ENCODE measurements at regions of chr9 and their contacts with region 1.

Region 1: DNA sequence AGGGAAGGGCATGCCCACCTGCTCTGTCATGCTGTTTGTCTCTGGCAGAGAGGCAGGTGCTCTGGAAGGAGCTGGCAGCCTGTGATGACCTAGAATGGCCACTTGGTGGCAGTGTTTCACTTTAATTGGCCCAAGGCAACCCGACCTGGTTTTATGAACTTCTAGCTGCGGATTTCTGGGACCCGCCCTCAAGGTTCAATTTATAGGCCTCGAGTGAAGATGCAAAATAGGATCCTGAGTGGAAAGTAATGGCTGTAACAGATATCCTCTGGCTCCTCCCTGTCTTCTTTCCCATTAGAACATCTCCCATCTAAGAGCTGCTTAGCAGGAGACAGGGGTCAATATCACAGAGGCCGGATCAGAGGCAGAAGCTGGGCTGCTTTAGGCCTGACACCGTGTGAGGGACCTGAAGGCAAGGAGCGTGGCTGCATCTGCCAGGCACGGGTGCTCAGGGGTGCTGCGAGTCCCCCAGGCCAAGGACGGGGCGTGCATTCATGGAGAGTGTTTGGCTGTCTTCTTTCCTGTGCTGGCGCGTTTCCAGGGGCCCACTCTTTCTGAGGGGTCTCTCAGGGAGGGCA is 56.7 kb upstream of the SLC28A3 start:
- DNase-seq: peak; percentile 60 to 77
- ATAC-seq: peak; percentile 78 to 93 (median 84)
- H3K4me3 ChIP-seq: no peak overlapping the region
- H3K4me3 Mint-ChIP-seq: no peak overlapping the region
- H3K27ac ChIP-seq: no peak overlapping the region
- H3K27ac Mint-ChIP-seq: no peak overlapping the region
- H3K4me1 ChIP-seq: peaks cover 7% of the 10 kb centered on the region
- H3K4me1 Mint-ChIP-seq: no peaks in the 10 kb centered on the region
- H3K27me3 ChIP-seq: no peaks in the 10 kb centered on the region
- H3K27me3 Mint-ChIP-seq: no peaks in the 10 kb centered on the region
- CTCF ChIP-seq: peak; percentile 94

Region 2: DNA sequence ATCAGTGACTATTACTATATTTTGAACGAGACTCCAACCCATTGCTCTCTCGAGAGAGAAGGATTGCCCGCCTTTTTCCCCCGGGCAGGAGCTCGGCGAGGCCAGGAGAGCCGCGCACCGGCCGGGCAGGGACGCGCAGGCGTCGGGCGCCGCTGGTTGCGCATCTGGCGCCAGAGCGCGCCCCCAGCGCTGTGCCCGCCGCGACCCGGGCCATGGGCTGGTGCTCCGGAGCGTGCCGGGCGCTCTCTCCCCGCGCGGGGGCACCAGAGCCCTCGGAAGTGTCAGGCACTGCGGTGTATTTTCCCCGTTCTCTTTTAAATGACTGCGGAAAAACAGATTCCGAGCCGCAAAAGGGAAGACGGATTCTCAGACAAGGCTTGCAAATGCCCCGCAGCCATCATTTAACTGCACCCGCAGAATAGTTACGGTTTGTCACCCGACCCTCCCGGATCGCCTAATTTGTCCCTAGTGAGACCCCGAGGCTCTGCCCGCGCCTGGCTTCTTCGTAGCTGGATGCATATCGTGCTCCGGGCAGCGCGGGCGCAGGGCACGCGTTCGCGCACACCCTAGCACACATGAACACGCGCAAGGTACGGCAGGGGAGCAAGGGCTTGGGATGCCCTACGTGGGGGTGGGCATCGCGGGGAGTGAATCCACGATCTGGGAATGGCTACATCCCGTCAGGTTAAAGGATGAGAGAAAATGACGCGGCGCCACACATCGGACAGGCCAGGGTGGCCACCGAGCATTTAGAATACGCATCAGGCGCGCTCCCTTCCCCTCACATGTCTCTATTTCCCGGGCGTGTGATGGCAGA is 271.2 kb after region 1 on chr9:
- intact Hi-C with region 1: no loop called
- DNase-seq: peak in 1 of 2 donors; percentile 18
- ATAC-seq: peak in 2 of 3 donors; percentile 53
- H3K4me3 ChIP-seq: no peak overlapping the region
- H3K4me3 Mint-ChIP-seq: peak overlapping the region; percentile 14
- H3K27ac ChIP-seq: no peak overlapping the region
- H3K27ac Mint-ChIP-seq: no peak overlapping the region
- H3K4me1 ChIP-seq: peaks cover 27% of the 10 kb centered on the region
- H3K4me1 Mint-ChIP-seq: peaks cover 0 to 15% of the 10 kb centered on the region in 2 donors
- H3K27me3 ChIP-seq: peaks cover 33% of the 10 kb centered on the region
- H3K27me3 Mint-ChIP-seq: peaks cover 54 to 56% of the 10 kb centered on the region in 2 donors
- CTCF ChIP-seq: no peak

Region 3: DNA sequence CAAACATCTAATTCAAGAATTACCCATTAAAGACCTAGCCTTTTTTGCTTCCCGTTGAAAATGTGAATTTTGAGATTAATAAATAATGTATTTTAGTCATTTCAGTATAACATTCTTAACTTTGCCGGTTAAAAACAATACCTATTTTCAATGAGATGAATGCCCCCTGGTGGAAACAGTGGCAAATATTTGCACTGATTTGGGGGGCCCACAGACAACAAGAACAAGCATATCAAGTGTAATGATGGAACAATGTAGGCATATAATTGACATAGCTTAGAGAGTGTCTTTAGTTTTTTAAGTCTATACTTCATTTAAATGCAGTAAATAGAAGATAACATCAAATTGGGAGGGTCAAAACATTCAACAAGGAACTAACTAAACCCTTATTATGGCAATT is 384.2 kb after region 1 on chr9:
- intact Hi-C with region 1: loop called (anchors 1 kb)
- DNase-seq: peak in 1 of 2 donors; percentile 21
- ATAC-seq: no peak
- H3K4me3 ChIP-seq: no peak overlapping the region
- H3K4me3 Mint-ChIP-seq: no peak overlapping the region
- H3K27ac ChIP-seq: no peak overlapping the region
- H3K27ac Mint-ChIP-seq: no peak overlapping the region
- H3K4me1 ChIP-seq: no peaks in the 10 kb centered on the region
- H3K4me1 Mint-ChIP-seq: no peaks in the 10 kb centered on the region
- H3K27me3 ChIP-seq: no peaks in the 10 kb centered on the region
- H3K27me3 Mint-ChIP-seq: peaks cover 30 to 62% of the 10 kb centered on the region in 2 donors
- CTCF ChIP-seq: no peak

Region 4: DNA sequence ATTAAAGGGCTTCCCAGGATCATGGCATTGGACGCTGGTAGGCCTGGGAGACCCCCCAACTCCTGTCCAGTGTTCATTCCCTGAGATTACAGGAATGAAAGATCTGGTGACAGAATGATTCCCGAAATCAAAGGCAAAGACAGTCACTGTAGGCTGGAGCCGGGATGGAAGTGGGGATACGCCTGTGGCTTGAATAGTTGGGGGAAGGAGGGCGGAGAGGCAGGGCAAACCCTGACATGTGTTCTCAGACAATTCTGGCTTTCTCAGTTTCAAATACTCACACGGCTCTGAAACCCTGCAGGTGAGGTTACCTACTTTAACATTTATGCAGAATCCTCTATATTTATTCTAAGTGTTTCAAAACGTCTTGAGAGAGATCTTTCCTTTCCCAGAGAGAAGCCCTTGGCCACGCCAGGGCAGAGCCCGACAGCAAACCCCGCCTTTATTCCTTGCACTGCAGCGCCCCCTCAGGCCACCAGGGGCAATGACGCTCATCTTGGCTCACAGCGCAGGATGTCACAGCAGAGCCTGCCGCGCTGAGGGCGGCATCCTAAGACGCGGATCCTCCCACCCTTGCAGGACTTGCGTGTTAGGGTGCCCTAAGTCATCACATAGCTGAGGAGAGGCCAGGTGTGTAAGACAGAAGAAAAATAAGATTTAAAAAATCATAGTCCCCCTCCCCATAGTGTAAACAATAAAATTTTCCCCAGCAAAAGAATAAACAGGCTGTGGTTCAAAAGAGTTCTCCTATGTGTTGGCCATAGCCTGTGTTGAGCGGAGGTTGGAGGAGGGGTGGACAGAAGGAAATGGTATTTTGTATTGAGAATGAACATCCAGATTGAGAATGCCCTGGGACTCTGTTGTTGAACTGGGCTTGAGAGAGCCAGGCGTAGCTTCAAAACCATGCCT is 556.8 kb after region 1 on chr9:
- intact Hi-C with region 1: loop called (anchors 1 kb)
- DNase-seq: peak; percentile 43
- ATAC-seq: peak; percentile 84 to 97 (median 86)
- H3K4me3 ChIP-seq: no peak overlapping the region
- H3K4me3 Mint-ChIP-seq: no peak overlapping the region
- H3K27ac ChIP-seq: no peak overlapping the region
- H3K27ac Mint-ChIP-seq: no peak overlapping the region
- H3K4me1 ChIP-seq: no peaks in the 10 kb centered on the region
- H3K4me1 Mint-ChIP-seq: peaks cover 0 to 7% of the 10 kb centered on the region in 2 donors
- H3K27me3 ChIP-seq: no peaks in the 10 kb centered on the region
- H3K27me3 Mint-ChIP-seq: peaks cover 16 to 22% of the 10 kb centered on the region in 2 donors
- CTCF ChIP-seq: peak; percentile 69

Region 5: GRCh38 chr9:85258823-85259370 is 861.7 kb after region 1 on chr9:
- intact Hi-C with region 1: loop called (anchors 5 kb)
- DNase-seq: peak in 1 of 2 donors; percentile 3
- ATAC-seq: peak in 2 of 3 donors; percentile 67 to 70
- H3K4me3 ChIP-seq: no peak overlapping the region
- H3K4me3 Mint-ChIP-seq: no peak overlapping the region
- H3K27ac ChIP-seq: no peak overlapping the region
- H3K27ac Mint-ChIP-seq: no peak overlapping the region
- H3K4me1 ChIP-seq: no peaks in the 10 kb centered on the region
- H3K4me1 Mint-ChIP-seq: peaks cover 5 to 9% of the 10 kb centered on the region in 2 donors
- H3K27me3 ChIP-seq: no peaks in the 10 kb centered on the region
- H3K27me3 Mint-ChIP-seq: peaks cover 30 to 53% of the 10 kb centered on the region in 2 donors
- CTCF ChIP-seq: no peak

Region 6: DNA sequence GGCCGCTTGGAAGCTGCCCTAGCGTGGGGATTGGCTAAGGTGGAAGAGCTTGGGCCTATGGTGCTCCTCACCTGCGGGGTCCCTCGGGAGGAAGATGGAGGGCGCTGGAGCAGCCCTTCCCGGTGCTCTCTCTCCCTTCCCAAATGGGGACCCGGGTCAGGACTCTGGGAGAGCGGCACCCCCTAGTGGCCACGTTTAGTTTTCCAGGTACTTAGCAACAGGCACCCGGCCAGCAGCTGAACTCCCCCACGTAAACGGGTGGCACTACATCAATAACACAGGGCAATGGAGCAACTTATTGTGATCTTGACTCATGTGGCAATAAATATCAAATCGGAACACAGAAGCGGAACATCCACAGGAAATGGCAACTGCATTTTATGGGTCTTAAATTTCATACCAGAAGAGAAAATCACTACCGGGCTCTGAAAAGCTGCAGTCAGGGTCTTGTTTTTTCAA is 1027.9 kb after region 1 on chr9:
- intact Hi-C with region 1: loop called (anchors 2 kb)
- DNase-seq: peak; percentile 47 to 59
- ATAC-seq: peak; percentile 71 to 83 (median 78)
- H3K4me3 ChIP-seq: no peak overlapping the region
- H3K4me3 Mint-ChIP-seq: no peak overlapping the region
- H3K27ac ChIP-seq: no peak overlapping the region
- H3K27ac Mint-ChIP-seq: peak overlapping the region in 1 of 2 donors; percentile 60
- H3K4me1 ChIP-seq: peaks cover 9% of the 10 kb centered on the region
- H3K4me1 Mint-ChIP-seq: peaks cover 20 to 21% of the 10 kb centered on the region in 2 donors
- H3K27me3 ChIP-seq: peaks cover 4% of the 10 kb centered on the region
- H3K27me3 Mint-ChIP-seq: peaks cover 21 to 42% of the 10 kb centered on the region in 2 donors
- CTCF ChIP-seq: peak; percentile 81

Region 7: GRCh38 chr9:85610074-85610860 is 1213.0 kb after region 1 on chr9:
- intact Hi-C with region 1: loop called (anchors 1 kb)
- DNase-seq: peak in 1 of 2 donors; percentile 86
- ATAC-seq: peak; percentile 90 to 99 (median 97)
- H3K4me3 ChIP-seq: no peak overlapping the region
- H3K4me3 Mint-ChIP-seq: no peak overlapping the region
- H3K27ac ChIP-seq: peak overlapping the region; percentile 42
- H3K27ac Mint-ChIP-seq: peak overlapping the region; percentile 67 to 86
- H3K4me1 ChIP-seq: no peaks in the 10 kb centered on the region
- H3K4me1 Mint-ChIP-seq: peaks cover 11 to 12% of the 10 kb centered on the region in 2 donors
- H3K27me3 ChIP-seq: no peaks in the 10 kb centered on the region
- H3K27me3 Mint-ChIP-seq: no peaks in the 10 kb centered on the region
- CTCF ChIP-seq: peak; percentile 83

Measured in natural killer cell (primary cell).